ENCODE measurements at regions of chr2 and their contacts with region 1.

Region 1: GRCh38 chr2:241836292-241836691 is 22.4 kb downstream of the PDCD1 start:
- DNase-seq: no peak
- H3K4me3 ChIP-seq: no peak overlapping the region
- H3K27ac ChIP-seq: no peak overlapping the region
- H3K4me1 ChIP-seq: no peaks in the 10 kb centered on the region
- H3K27me3 ChIP-seq: no peaks in the 10 kb centered on the region
- CTCF ChIP-seq: no peak

Region 2: GRCh38 chr2:241748468-241749256 is 87.6 kb before region 1 on chr2:
- CTCF ChIA-PET with region 1: no interaction called
- dilution Hi-C with region 1: loop called (anchors 5 kb)
- in situ Hi-C with region 1: no loop called
- intact Hi-C with region 1: no loop called
- DNase-seq: no peak
- H3K4me3 ChIP-seq: no peak overlapping the region
- H3K27ac ChIP-seq: no peak overlapping the region
- H3K4me1 ChIP-seq: peaks cover 9% of the 10 kb centered on the region
- H3K27me3 ChIP-seq: no peaks in the 10 kb centered on the region
- CTCF ChIP-seq: no peak